GM10248 (cell line): ENCODE measurements at regions of chr14 and their contacts with region 1.

Region 1: GRCh38 chr14:74905375-74906142 is 17.5 kb downstream of the RPS6KL1 start:
- DNase-seq: peak; percentile 82
- CTCF ChIP-seq: peak; percentile 88

Region 2: GRCh38 chr14:74612350-74613021 is 293.1 kb before region 1 on chr14:
- CTCF ChIA-PET with region 1: interaction called, 28 read pairs
- POLR2A ChIA-PET with region 1: no interaction called
- DNase-seq: peak; percentile 87
- CTCF ChIP-seq: peak; percentile 83

Region 3: DNA sequence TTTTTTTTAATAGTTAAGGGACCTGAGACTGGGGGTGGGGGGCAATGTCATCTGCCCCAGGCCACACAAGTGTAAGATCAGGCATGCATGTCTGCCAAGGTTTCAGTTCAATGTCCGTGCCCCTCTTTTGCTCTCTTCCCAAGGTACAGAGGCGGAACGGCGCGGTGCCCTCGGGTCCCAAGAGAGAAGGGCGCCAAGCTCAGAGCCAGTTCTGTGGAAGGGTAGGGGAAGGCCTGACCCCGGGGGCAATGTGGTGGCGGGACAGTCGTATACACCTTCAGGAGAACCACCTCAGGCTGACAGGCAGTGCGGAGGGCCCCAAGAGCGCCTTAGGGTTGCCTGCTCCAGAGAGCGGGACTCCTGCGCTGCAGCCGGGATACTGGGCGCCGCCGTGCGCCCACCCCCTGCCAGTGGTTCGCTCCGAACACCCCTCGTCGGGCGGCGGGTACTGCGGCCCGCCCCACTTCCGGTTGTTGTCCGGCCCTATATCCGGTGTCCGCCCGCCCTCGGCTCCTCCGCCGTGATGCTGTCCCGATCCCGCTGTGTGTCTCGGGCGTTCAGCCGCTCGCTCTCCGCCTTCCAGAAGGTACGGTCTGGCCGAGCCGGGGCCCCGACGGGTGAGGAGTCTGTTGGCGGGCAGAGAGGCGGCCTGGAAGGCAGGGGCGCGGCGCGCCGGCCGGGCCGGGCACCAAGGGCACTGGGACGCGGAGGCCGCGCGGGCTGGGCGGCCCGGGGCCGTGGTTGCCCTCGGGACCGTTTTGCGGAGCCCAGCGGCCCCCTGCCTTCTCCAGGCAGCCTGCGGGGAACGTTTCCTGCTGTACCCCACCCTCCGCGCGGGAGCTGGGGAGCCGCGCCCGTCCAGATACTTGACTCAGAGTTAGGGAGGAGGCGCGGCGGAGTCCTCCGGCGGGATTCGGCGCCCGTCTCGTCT is 23.9 kb before region 1 on chr14 and contains the start of gene DLST:
- CTCF ChIA-PET with region 1: interaction called, 214 read pairs
- POLR2A ChIA-PET with region 1: interaction called, 4 read pairs
- DNase-seq: peak; percentile 97
- CTCF ChIP-seq: no peak

Region 4: DNA sequence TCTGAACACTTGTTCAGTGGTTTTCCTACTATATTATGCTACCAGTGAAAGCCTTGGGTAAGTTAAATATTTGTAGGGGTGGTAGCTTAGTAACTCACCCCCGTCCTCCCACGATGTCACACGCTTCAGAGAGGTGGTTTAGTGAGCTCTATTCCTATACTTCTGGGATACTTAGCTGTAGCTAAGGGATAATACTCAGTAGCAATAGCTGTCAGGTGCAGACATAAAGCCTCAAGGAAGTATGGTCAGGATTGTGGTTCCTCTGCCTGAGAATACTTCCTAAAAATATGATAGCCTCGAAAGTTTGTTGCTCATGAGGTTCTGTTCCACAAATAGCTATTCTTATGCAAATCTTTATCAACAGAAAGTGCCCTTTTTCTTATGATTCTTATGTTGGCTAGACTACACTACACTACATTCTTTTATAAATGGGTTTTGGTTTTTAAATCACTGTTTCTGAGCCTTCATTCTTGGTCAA is 11.9 kb before region 1 on chr14:
- CTCF ChIA-PET with region 1: interaction called, 143 read pairs
- POLR2A ChIA-PET with region 1: no interaction called
- DNase-seq: no peak
- CTCF ChIP-seq: no peak

Region 5: GRCh38 chr14:74917646-74918081 is 12.1 kb after region 1 on chr14:
- CTCF ChIA-PET with region 1: interaction called, 81 read pairs
- POLR2A ChIA-PET with region 1: no interaction called
- DNase-seq: no peak
- CTCF ChIP-seq: no peak

Region 6: GRCh38 chr14:74922739-74923401 is 17.3 kb after region 1 on chr14 and contains the start of gene RPS6KL1:
- CTCF ChIA-PET with region 1: interaction called, 81 read pairs
- POLR2A ChIA-PET with region 1: no interaction called
- DNase-seq: peak; percentile 93
- CTCF ChIP-seq: no peak